Dendritic cell treated with granulocyte-macrophage colony-stimulating factor and Interleukin-4, amounts not matched to agents 40 ng/mL and 50 ng/mL, for 4 days (primary cell): ENCODE measurements at regions of chr15 and their contacts with region 1.

Region 1: GRCh38 chr15:67863442-67863987 is 23.7 kb upstream of the RNU6-1 start:
- H3K4me3 Mint-ChIP-seq: peak overlapping the region; percentile 89
- H3K27ac Mint-ChIP-seq: peak overlapping the region; percentile 65
- H3K4me1 Mint-ChIP-seq: peaks cover 10% of the 10 kb centered on the region
- H3K27me3 Mint-ChIP-seq: peaks cover 13% of the 10 kb centered on the region

Region 2: DNA sequence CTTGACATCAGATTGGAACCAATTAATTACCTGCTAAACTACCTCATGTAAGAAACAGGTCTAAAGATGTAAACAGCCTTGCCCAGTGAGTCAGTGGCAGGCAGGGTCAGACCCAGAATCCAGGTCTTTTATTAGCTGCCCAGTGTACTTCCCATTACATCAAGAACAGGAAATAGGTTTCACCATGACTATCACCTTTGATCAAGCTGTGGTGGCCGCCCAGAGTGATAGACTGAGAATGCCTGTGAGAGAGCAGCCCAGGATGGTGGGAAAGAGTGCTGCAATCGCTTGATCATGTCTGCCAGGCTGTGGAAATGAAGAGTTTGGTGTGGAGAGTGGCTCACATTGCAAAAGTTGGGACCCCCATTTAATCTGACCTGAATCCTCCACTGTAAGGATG is 129.3 kb after region 1 on chr15:
- intact Hi-C with region 1: no loop called
- H3K4me3 Mint-ChIP-seq: no peak overlapping the region
- H3K27ac Mint-ChIP-seq: no peak overlapping the region
- H3K4me1 Mint-ChIP-seq: peaks cover 10% of the 10 kb centered on the region
- H3K27me3 Mint-ChIP-seq: peaks cover 8% of the 10 kb centered on the region

Region 3: DNA sequence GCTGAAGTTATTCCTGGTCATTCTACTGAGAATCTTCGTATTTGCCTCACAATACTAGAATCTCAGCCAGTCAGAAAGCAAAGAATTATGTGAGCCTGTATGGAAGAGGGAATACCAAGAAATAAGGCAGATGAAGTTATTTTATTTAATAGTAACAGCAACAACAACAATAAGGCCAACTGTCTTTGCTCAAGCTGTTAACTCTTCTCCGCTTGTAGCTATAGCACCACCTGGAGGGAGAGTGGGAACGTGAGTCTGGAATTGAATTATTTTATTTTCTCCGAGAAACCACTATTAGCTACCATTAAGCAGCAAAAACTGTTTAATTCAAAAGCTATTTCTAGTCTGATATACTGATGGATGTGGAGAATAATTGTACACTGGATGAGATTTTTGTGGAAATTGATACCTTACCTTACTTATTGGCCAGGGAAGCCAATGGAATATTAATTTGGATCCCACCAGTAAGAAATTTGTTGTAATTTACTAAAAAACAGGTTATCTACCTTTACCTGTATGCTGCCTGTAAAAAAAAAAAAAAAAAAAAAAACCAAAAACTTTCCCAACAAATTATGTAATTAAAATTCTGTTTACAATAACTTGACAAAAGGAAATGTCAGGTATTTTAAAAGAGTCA is 291.5 kb after region 1 on chr15:
- intact Hi-C with region 1: loop called (anchors 2 kb)
- H3K4me3 Mint-ChIP-seq: no peak overlapping the region
- H3K27ac Mint-ChIP-seq: peak overlapping the region; percentile 13
- H3K4me1 Mint-ChIP-seq: peaks cover 12% of the 10 kb centered on the region
- H3K27me3 Mint-ChIP-seq: no peaks in the 10 kb centered on the region